Caco-2 (cell line): ENCODE measurements at regions of chr3 and their contacts with region 1.

Region 1: GRCh38 chr3:148075763-148076716 is 621.7 kb upstream of the AGTR1 start:
- DNase-seq: peak; percentile 27 to 29
- H3K4me3 ChIP-seq: no peak overlapping the region
- H3K4me3 Mint-ChIP-seq: no peak overlapping the region
- H3K27ac Mint-ChIP-seq: no peak overlapping the region
- H3K4me1 ChIP-seq: no peaks in the 10 kb centered on the region
- H3K4me1 Mint-ChIP-seq: no peaks in the 10 kb centered on the region
- H3K27me3 ChIP-seq: no peaks in the 10 kb centered on the region
- H3K27me3 Mint-ChIP-seq: no peaks in the 10 kb centered on the region
- CTCF ChIP-seq: peak; percentile 38 to 82

Region 2: DNA sequence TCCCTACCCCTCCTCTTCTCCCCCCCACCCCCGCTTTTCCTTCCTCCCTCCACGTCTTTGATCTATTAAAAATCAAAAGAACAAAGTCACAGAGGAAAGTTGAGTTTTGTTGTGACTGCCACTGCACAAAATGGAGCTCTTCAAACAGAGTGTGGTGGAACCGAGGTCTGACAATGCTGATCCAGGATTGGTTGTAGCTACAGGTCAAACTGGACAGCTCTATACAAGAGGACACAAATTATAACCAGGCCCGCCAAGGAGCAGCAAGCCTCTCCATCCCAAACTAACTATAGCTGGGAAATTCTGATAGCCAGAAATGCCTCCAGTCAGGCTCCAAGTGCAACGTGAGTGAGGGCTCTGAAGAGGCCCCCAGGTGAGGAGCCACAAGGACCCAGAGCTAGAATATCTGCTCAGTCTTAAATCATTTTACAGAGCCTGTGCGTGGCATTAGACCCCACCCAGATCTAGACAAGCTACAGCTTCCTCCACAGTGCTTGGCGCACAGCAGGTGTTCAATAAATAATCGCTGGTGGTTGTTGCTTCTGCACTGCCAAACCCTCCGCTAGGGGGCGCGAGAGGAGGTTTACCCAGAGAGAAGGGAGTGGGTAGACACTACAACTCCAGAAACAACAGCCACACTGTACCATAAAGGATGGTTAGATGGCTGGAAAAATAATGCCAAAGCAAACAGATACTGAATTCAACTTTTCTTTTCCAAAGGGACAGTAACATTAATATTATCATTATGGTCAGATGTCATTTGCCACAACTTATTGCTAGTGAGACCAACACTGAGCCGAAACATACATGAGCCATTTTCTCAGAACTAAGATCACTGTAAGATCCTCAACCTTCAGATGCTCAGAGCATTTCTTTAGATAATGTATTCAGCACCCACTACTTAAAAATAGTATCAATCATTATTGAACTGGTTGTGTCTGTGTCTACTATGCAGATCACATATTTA is 714.3 kb before region 1 on chr3:
- CTCF ChIA-PET with region 1: no interaction called
- POLR2A ChIA-PET with region 1: no interaction called
- intact Hi-C with region 1: loop called (anchors 2 kb)
- DNase-seq: peak; percentile 47 to 65
- H3K4me3 ChIP-seq: no peak overlapping the region
- H3K4me3 Mint-ChIP-seq: no peak overlapping the region
- H3K27ac Mint-ChIP-seq: no peak overlapping the region
- H3K4me1 ChIP-seq: no peaks in the 10 kb centered on the region
- H3K4me1 Mint-ChIP-seq: no peaks in the 10 kb centered on the region
- H3K27me3 ChIP-seq: no peaks in the 10 kb centered on the region
- H3K27me3 Mint-ChIP-seq: peaks cover 8% of the 10 kb centered on the region
- CTCF ChIP-seq: peak in 1 of 2 experiments; percentile 58

Region 3: DNA sequence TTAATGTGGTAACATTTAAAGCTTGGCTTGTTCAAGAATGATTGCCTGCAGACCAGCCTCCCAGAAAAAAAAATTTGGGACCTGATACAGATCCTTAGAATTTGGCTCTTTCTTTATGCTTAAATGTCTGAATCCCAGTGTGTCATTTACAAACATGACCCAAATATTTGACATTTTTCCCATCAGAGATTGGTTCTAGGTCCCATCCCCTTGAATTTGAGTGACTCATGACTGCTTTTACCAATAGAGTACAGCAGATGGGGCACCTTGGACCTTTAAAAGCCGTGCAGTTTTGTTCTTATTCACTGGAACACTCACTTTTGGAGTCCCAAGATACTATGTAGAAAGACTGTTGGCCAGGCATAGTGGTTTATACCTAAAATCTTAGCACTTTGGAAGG is 435.3 kb before region 1 on chr3:
- CTCF ChIA-PET with region 1: no interaction called
- POLR2A ChIA-PET with region 1: no interaction called
- intact Hi-C with region 1: loop called (anchors 2 kb)
- DNase-seq: no peak
- H3K4me3 ChIP-seq: no peak overlapping the region
- H3K4me3 Mint-ChIP-seq: no peak overlapping the region
- H3K27ac Mint-ChIP-seq: no peak overlapping the region
- H3K4me1 ChIP-seq: no peaks in the 10 kb centered on the region
- H3K4me1 Mint-ChIP-seq: no peaks in the 10 kb centered on the region
- H3K27me3 ChIP-seq: no peaks in the 10 kb centered on the region
- H3K27me3 Mint-ChIP-seq: no peaks in the 10 kb centered on the region
- CTCF ChIP-seq: no peak

Region 4: DNA sequence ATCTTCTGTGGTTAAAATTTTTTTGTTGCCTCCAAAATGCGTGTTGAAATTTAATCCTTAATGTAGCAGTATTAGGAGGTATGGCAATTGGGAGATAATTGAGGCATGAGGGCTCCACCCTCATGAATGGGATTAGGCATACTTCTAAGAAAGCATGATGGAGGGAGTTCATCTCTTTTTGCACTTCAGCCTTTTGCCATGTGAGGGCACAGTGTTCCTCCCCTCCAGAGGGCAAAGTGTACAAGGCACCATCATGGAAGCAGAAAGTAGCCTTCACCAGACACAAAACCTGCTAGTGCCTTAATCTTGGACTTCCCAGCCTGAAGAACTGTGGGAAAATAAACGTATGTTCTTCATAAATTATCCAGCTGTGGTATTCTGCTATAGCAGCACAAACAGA is 237.4 kb before region 1 on chr3:
- CTCF ChIA-PET with region 1: no interaction called
- POLR2A ChIA-PET with region 1: no interaction called
- intact Hi-C with region 1: loop called (anchors 1 kb)
- DNase-seq: peak in 1 of 2 experiments; percentile 7
- H3K4me3 ChIP-seq: no peak overlapping the region
- H3K4me3 Mint-ChIP-seq: no peak overlapping the region
- H3K27ac Mint-ChIP-seq: no peak overlapping the region
- H3K4me1 ChIP-seq: no peaks in the 10 kb centered on the region
- H3K4me1 Mint-ChIP-seq: no peaks in the 10 kb centered on the region
- H3K27me3 ChIP-seq: no peaks in the 10 kb centered on the region
- H3K27me3 Mint-ChIP-seq: no peaks in the 10 kb centered on the region
- CTCF ChIP-seq: no peak